ENCODE measurements at regions of chr5 and their contacts with region 1.

Region 1: GRCh38 chr5:137735555-137736284 is at the start of gene KLHL3:
- DNase-seq: peak in 13 of 14 experiments; percentile 17 to 65 (median 38)
- ATAC-seq: peak; percentile 48
- H3K4me3 ChIP-seq: peak within 1 kb of the TSS; percentile 72
- H3K4me3 Mint-ChIP-seq: no peak within 1 kb of the TSS
- H3K27ac ChIP-seq: peak within 1 kb of the TSS; percentile 31 to 68
- H3K27ac Mint-ChIP-seq: no peak within 1 kb of the TSS
- H3K4me1 ChIP-seq: peaks cover 42% of the 10 kb centered on the region
- H3K4me1 Mint-ChIP-seq: peaks cover 16% of the 10 kb centered on the region
- H3K27me3 ChIP-seq: no peaks in the 10 kb centered on the region
- H3K27me3 Mint-ChIP-seq: no peaks in the 10 kb centered on the region
- CTCF ChIP-seq: no peak
- total RNA-seq, gene KLHL3: 22.0 to 25.9 TPM

Region 2: DNA sequence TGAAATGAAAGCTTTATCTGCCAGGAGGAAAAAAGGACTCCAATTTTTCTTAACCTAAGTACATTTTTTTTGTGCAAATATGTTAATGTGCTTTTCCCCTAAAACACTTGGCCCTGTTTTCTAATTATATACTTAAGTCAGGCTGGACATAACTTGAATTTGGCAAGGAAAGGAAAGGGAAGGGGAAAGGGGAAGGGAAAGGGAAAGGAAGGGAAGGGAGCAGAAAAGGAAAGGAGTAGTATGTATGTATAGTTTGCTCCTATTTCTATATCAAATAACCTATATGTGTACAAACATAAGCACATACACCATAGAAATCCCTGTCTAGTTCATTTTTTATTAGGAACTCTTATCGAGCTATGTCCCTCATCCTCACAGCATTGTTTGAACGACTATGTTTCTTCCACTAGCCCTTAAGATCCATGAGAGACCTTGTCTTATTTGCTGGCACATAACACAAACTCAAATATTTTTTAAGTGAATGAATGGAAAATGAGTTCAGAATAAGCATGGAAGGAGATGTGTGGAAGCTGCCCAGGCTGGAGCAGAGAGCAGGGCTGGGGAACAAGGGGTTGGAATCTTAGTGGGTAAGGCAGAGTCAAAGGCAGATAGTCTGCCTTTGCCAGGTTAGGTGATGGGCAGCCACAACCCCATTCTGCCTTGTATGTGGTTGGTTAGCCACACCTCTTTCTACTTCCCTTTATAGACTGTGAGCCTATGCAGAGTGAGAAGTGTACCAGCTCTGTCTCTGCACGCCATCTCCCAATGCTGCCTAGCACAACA is 69.9 kb before region 1 on chr5:
- CTCF ChIA-PET with region 1: interaction called, 88 read pairs
- POLR2A ChIA-PET with region 1: interaction called, 30 read pairs
- intact Hi-C with region 1: loop called in 1 of 2 experiments (anchors 2 kb)
- DNase-seq: peak; percentile 9 to 68 (median 31)
- ATAC-seq: peak; percentile 100
- H3K4me3 ChIP-seq: no peak overlapping the region
- H3K4me3 Mint-ChIP-seq: no peak overlapping the region
- H3K27ac ChIP-seq: no peak overlapping the region
- H3K27ac Mint-ChIP-seq: peak overlapping the region; percentile 59
- H3K4me1 ChIP-seq: peaks cover 7% of the 10 kb centered on the region
- H3K4me1 Mint-ChIP-seq: peaks cover 31% of the 10 kb centered on the region
- H3K27me3 ChIP-seq: no peaks in the 10 kb centered on the region
- H3K27me3 Mint-ChIP-seq: no peaks in the 10 kb centered on the region
- CTCF ChIP-seq: no peak

Region 3: GRCh38 chr5:137695651-137696428 is 39.9 kb before region 1 on chr5:
- CTCF ChIA-PET with region 1: interaction called, 5 read pairs
- POLR2A ChIA-PET with region 1: interaction called, 43 read pairs
- intact Hi-C with region 1: loop called (anchors 2 kb)
- DNase-seq: peak in 12 of 14 experiments; percentile 9 to 70 (median 34)
- ATAC-seq: peak; percentile 90
- H3K4me3 ChIP-seq: peak overlapping the region; percentile 11
- H3K4me3 Mint-ChIP-seq: peak overlapping the region; percentile 84
- H3K27ac ChIP-seq: peak overlapping the region; percentile 63 to 65
- H3K27ac Mint-ChIP-seq: peak overlapping the region; percentile 88
- H3K4me1 ChIP-seq: peaks cover 50% of the 10 kb centered on the region
- H3K4me1 Mint-ChIP-seq: peaks cover 71% of the 10 kb centered on the region
- H3K27me3 ChIP-seq: no peaks in the 10 kb centered on the region
- H3K27me3 Mint-ChIP-seq: no peaks in the 10 kb centered on the region
- CTCF ChIP-seq: peak; percentile 54